Colonic mucosa (tissue), 4 donors: ENCODE measurements at regions of chr2 and their contacts with region 1.

Region 1: GRCh38 chr2:52886556-52886955 is 881.0 kb upstream of the CHAC2 start:
- DNase-seq: no peak
- H3K4me3 ChIP-seq: no peak overlapping the region
- H3K27ac ChIP-seq: no peak overlapping the region
- H3K4me1 ChIP-seq: no peaks in the 10 kb centered on the region
- H3K27me3 ChIP-seq: no peaks in the 10 kb centered on the region
- CTCF ChIP-seq: no peak

Region 2: DNA sequence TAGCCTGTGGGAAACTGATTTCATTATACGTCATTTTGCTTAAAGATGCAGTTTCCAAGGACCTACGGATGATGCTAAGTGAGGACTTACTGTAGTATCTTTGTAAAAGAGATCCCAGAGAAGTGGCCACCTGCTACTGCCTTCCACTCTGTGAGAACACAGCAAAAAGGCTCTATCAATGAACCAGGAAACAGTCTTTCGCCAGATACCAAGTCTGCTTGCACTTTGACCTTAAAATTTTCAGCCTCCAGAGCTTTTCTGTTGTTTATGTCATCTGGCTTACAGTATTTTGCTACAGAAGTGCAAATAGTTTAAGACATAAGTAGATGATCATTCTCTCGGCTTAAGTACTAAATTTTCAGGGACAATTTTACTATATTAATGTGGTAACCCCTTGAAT is 33.1 kb after region 1 on chr2:
- intact Hi-C with region 1: loop called (anchors 2 kb)
- DNase-seq: no peak
- H3K4me3 ChIP-seq: no peak overlapping the region
- H3K27ac ChIP-seq: no peak overlapping the region
- H3K4me1 ChIP-seq: no peaks in the 10 kb centered on the region
- H3K27me3 ChIP-seq: no peaks in the 10 kb centered on the region
- CTCF ChIP-seq: no peak